A549 (cell line): ENCODE measurements at regions of chr15 and their contacts with region 1.

Region 1: DNA sequence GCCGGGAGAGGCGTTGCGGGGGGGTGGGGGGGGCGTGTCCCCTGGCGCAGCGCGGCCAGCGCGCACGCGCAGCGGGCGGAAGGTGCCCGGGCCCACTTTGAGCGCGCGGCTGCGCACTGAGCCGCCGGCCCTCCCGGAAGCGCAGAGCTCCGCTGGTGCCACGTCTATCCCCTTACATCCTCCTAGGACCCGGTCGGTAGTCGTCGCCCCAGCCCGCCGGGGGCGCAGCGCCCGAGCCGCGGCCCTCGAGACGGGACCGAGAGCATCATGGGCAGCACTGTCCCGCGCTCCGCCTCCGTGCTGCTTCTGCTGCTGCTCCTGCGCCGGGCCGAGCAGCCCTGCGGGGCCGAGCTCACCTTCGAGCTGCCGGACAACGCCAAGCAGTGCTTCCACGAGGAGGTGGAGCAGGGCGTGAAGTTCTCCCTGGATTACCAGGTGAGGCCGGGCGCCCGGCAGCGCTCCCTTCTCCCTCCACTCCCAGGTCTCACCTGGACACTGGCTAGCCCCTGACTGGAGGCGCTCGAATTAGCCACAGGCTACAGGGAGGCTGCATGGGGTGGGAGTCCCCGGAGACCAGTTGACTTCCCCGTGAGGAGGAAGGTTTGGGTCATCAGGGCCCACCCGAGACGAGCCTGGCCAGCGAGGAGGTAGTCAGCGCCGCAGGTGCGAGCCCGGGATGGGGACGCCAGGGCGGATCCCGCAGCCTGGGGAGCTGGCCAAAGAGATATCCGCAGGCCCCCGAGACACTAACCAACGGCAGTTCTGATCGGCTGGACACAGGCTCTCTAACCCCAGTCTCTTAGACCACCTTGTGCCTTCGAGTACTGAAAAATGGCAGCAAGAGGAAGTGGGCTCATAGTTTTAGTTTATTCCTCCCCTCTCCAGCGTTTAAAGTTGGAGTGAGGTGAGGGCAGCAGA is at the start of gene TMED3:
- DNase-seq: peak; percentile 90 to 98
- ATAC-seq: peak; percentile 94 to 98
- H3K4me3 ChIP-seq: peak within 1 kb of the TSS; percentile 73
- H3K27ac ChIP-seq: peak within 1 kb of the TSS; percentile 87 to 91
- H3K4me1 ChIP-seq: peaks cover 16% of the 10 kb centered on the region
- CTCF ChIP-seq: peak; percentile 24; the same call in 2 of the 3 replicates
- EP300 ChIP-seq: no peak
- POLR2A ChIP-seq: peak; percentile 95
- RAD21 ChIP-seq: no peak
- polyA plus RNA-seq, gene TMED3: 202 and 220 TPM in 2 replicates

Region 2: DNA sequence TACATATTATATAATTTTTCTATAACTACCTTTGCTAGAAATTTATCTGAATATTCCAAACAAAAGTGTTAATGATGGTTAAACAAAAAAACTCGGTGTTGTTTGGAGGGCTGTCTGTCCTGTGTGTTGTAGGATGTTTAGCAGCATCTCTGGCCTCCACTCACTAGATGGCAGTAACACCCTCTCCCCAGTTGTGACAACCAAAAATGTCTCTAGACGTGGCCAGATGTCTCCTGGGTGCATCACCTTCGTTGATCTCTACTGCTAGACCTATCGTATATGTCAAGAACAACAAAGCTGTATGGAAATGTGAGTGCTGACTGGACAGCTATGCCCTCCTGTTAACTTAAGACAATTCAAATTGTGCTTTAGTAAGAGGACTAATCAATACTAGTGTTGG is 14.7 kb before region 1 on chr15:
- CTCF ChIA-PET with region 1: interaction called, 11 read pairs
- POLR2A ChIA-PET with region 1: interaction called, 3 read pairs
- DNase-seq: peak in 1 of 2 experiments; percentile 36
- ATAC-seq: peak in 1 of 2 experiments; percentile 77; a peak in 3 of 6 replicates
- H3K4me3 ChIP-seq: no peak overlapping the region
- H3K27ac ChIP-seq: no peak overlapping the region
- H3K4me1 ChIP-seq: no peaks in the 10 kb centered on the region
- CTCF ChIP-seq: no peak
- EP300 ChIP-seq: no peak
- POLR2A ChIP-seq: no peak
- RAD21 ChIP-seq: peak in 1 of 2 experiments; percentile 21; a peak in 1 of 5 replicates